ENCODE measurements at regions of chr4 and their contacts with region 1.

Region 1: GRCh38 chr4:119212234-119212963 is at the start of gene USP53:
- DNase-seq: peak; percentile 99
- H3K4me3 ChIP-seq: peak within 1 kb of the TSS; percentile 58 to 99 (median 98)
- H3K27ac ChIP-seq: peak within 1 kb of the TSS; percentile 96
- H3K4me1 ChIP-seq: peaks cover 41% of the 10 kb centered on the region
- H3K27me3 ChIP-seq: no peaks in the 10 kb centered on the region
- CTCF ChIP-seq: no peak
- POLR2A ChIP-seq: peak; percentile 93
- total RNA-seq, gene USP53: 22.8 and 28.3 TPM in 2 replicates

Region 2: DNA sequence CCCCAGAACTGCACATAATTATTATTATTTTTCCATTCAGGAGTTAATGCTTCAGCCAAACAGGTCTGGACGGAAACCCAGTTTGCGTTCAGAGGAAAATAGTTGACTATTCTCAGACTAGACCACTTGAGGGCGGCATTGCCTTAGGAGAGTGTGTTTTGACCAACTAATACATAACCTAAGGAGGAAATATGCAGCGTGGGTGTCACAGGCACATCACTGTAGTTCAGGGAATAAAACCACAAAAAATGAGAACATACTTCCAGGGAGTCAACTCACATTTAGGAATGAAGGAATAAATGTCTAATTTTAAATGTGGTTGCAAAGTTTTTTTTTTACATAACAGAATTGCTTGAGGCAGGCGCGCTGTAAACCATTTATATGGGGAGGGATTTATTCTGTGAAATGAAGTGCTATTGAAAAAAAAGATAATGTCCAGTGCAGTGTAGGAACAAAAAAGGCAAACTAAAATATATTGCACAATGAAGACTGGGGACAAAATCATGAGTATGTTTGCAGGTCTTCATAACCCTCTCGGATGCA is 230.5 kb before region 1 on chr4:
- CTCF ChIA-PET with region 1: no interaction called
- POLR2A ChIA-PET with region 1: no interaction called
- dilution Hi-C with region 1: no loop called
- intact Hi-C with region 1: loop called (anchors 2 kb)
- DNase-seq: peak; percentile 64
- H3K4me3 ChIP-seq: no peak overlapping the region
- H3K27ac ChIP-seq: no peak overlapping the region
- H3K4me1 ChIP-seq: peaks cover 7% of the 10 kb centered on the region
- H3K27me3 ChIP-seq: no peaks in the 10 kb centered on the region
- CTCF ChIP-seq: peak; percentile 56 to 57
- POLR2A ChIP-seq: no peak

Region 3: DNA sequence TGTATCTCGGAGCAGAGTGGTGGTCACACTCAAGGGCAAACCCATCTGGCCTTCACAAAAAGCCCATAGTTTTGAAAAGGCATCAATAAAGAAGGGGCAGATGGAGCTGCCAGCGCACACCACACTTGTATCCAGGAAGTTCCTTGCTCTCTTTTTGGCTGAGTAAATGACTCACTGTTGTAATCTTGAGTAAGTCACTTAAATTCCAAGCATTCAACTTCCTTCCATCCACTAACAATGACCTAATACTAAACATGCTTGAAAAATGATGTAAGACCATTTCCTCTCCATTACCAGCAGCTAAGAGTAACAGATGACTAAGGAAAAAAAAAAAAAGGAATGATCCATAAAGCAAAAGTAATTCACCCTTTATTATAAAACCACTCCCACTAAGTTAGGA is 109.1 kb before region 1 on chr4:
- CTCF ChIA-PET with region 1: interaction called, 9 read pairs
- POLR2A ChIA-PET with region 1: interaction called, 8 read pairs
- dilution Hi-C with region 1: no loop called
- intact Hi-C with region 1: loop called (anchors 1 kb)
- DNase-seq: peak; percentile 93
- H3K4me3 ChIP-seq: no peak overlapping the region
- H3K27ac ChIP-seq: peak overlapping the region; percentile 95
- H3K4me1 ChIP-seq: peaks cover 43% of the 10 kb centered on the region
- H3K27me3 ChIP-seq: no peaks in the 10 kb centered on the region
- CTCF ChIP-seq: no peak
- POLR2A ChIP-seq: peak; percentile 54

Region 4: GRCh38 chr4:119124352-119124751 is 88.0 kb before region 1 on chr4:
- CTCF ChIA-PET with region 1: interaction called, 5 read pairs
- POLR2A ChIA-PET with region 1: interaction called, 3 read pairs
- dilution Hi-C with region 1: no loop called
- intact Hi-C with region 1: loop called (anchors 2 kb)
- DNase-seq: peak; percentile 64
- H3K4me3 ChIP-seq: no peak overlapping the region
- H3K27ac ChIP-seq: peak overlapping the region; percentile 26
- H3K4me1 ChIP-seq: peaks cover 19% of the 10 kb centered on the region
- H3K27me3 ChIP-seq: no peaks in the 10 kb centered on the region
- CTCF ChIP-seq: no peak
- POLR2A ChIP-seq: no peak

Region 5: DNA sequence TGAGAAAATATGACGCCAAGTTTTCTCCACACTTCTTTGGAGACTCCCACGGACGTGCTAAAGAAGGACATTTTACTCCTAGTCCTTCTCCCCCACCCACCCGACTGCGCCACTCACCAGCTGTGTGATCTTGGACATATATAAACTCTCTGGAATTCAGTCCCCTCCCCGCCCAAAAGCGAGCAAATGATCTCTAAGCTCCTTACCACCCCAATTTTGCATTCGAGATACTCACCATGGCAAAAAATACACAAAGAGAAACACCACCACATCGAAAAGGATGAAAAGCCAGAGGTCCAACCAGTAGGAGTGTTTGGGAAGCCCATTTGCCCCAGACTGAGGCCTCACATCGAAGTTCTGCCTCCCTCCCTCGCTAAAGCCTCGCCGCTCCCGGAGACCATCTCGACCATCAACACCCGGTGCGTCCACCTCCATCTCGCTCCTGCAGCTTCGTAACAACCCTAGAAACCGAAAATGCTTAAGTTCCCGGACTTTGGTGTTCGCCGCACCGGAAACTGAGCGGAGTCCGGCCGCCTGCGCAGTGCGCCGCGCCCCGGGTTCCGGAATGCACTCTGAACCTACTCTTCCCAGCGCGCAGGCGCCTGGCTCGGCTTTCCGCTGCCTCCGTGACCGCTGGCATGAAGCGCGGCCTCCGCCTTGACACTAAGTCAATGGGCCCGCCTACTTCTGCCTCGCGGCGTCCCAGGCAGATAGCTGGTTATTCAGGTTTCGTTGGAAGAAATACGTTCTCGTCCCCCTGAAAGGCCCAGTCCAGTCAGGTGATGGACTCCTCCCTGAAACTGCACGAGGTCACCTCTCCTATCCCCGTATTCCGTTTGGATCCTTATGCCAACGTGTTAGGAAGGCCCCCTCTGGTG is 87.9 kb after region 1 on chr4:
- CTCF ChIA-PET with region 1: interaction called, 9 read pairs
- POLR2A ChIA-PET with region 1: interaction called, 9 read pairs
- dilution Hi-C with region 1: no loop called
- intact Hi-C with region 1: loop called (anchors 1 kb)
- DNase-seq: peak; percentile 89
- H3K4me3 ChIP-seq: peak overlapping the region; percentile 49 to 82 (median 76)
- H3K27ac ChIP-seq: peak overlapping the region; percentile 60
- H3K4me1 ChIP-seq: peaks cover 12% of the 10 kb centered on the region
- H3K27me3 ChIP-seq: no peaks in the 10 kb centered on the region
- CTCF ChIP-seq: peak in 1 of 2 donors; percentile 1
- POLR2A ChIP-seq: peak; percentile 78